ENCODE measurements at regions of chr5 and their contacts with region 1.

Region 1: GRCh38 chr5:168706655-168707069 is 127.5 kb upstream of the PANK3 start:
- DNase-seq: peak; percentile 9 to 58
- H3K4me3 ChIP-seq: no peak overlapping the region
- H3K27ac ChIP-seq: no peak overlapping the region
- H3K4me1 ChIP-seq: no peaks in the 10 kb centered on the region
- H3K27me3 ChIP-seq: no peaks in the 10 kb centered on the region
- CTCF ChIP-seq: peak; percentile 68 to 89 (median 71)
- EP300 ChIP-seq: no peak
- POLR2A ChIP-seq: no peak
- RAD21 ChIP-seq: peak; percentile 94 to 96

Region 2: GRCh38 chr5:168390491-168390890 is 316.2 kb before region 1 on chr5:
- CTCF ChIA-PET with region 1: no interaction called
- POLR2A ChIA-PET with region 1: no interaction called
- DNase-seq: no peak
- H3K4me3 ChIP-seq: no peak overlapping the region
- H3K27ac ChIP-seq: no peak overlapping the region
- H3K4me1 ChIP-seq: no peaks in the 10 kb centered on the region
- H3K27me3 ChIP-seq: no peaks in the 10 kb centered on the region
- CTCF ChIP-seq: no peak
- EP300 ChIP-seq: no peak
- POLR2A ChIP-seq: no peak
- RAD21 ChIP-seq: no peak

Region 3: DNA sequence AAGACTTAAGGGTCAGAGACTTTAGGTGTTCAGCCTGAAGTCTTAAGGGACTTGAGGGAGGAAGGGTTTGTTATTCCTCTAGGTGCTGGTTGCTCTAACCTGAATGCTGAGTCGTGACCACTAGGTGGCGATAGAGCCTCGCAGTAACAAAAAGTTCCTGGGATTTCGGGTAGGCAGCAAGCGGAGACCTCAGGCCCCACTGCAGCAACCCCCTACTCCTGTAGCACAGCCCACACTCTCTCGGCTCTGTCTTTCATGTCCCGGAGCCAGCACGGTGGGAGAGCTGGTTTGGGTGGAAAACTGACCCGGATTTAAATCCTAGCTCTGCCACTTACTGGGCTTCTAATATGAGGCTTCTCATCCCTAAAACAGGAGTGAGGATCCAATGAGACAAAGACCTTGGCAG is 27.1 kb before region 1 on chr5:
- CTCF ChIA-PET with region 1: interaction called, 13 read pairs
- POLR2A ChIA-PET with region 1: interaction called, 3 read pairs
- DNase-seq: peak; percentile 77 to 92
- H3K4me3 ChIP-seq: no peak overlapping the region
- H3K27ac ChIP-seq: no peak overlapping the region
- H3K4me1 ChIP-seq: no peaks in the 10 kb centered on the region; a peak in 1 of 7 replicates
- H3K27me3 ChIP-seq: no peaks in the 10 kb centered on the region
- CTCF ChIP-seq: peak; percentile 58 to 96 (median 85)
- EP300 ChIP-seq: no peak
- POLR2A ChIP-seq: no peak
- RAD21 ChIP-seq: peak; percentile 96 to 97

Region 4: GRCh38 chr5:168734620-168735300 is 28.1 kb after region 1 on chr5:
- CTCF ChIA-PET with region 1: interaction called, 17 read pairs
- POLR2A ChIA-PET with region 1: no interaction called
- DNase-seq: no peak
- H3K4me3 ChIP-seq: no peak overlapping the region
- H3K27ac ChIP-seq: no peak overlapping the region
- H3K4me1 ChIP-seq: no peaks in the 10 kb centered on the region; a peak in 1 of 7 replicates
- H3K27me3 ChIP-seq: no peaks in the 10 kb centered on the region
- CTCF ChIP-seq: no peak
- EP300 ChIP-seq: no peak
- POLR2A ChIP-seq: no peak
- RAD21 ChIP-seq: no peak

Region 5: GRCh38 chr5:168879929-168880328 is 173.3 kb after region 1 on chr5:
- CTCF ChIA-PET with region 1: interaction called, 14 read pairs
- POLR2A ChIA-PET with region 1: no interaction called
- DNase-seq: no peak
- H3K4me3 ChIP-seq: no peak overlapping the region
- H3K27ac ChIP-seq: no peak overlapping the region
- H3K4me1 ChIP-seq: peaks cover 3 to 16% (median 7%) of the 10 kb centered on the region in 4 experiments
- H3K27me3 ChIP-seq: peaks cover 0 to 7% (median 4%) of the 10 kb centered on the region in 4 experiments; a peak in 4 of 7 replicates
- CTCF ChIP-seq: no peak
- EP300 ChIP-seq: no peak
- POLR2A ChIP-seq: no peak
- RAD21 ChIP-seq: no peak

Region 6: GRCh38 chr5:168934169-168934568 is 227.5 kb after region 1 on chr5:
- CTCF ChIA-PET with region 1: interaction called, 10 read pairs
- POLR2A ChIA-PET with region 1: no interaction called
- DNase-seq: no peak
- H3K4me3 ChIP-seq: no peak overlapping the region
- H3K27ac ChIP-seq: no peak overlapping the region
- H3K4me1 ChIP-seq: peaks cover 0 to 5% (median 3%) of the 10 kb centered on the region in 4 experiments; a peak in 4 of 7 replicates
- H3K27me3 ChIP-seq: no peaks in the 10 kb centered on the region
- CTCF ChIP-seq: no peak
- EP300 ChIP-seq: no peak
- POLR2A ChIP-seq: no peak
- RAD21 ChIP-seq: no peak

Region 7: GRCh38 chr5:168987543-168988300 is 281.1 kb after region 1 on chr5:
- CTCF ChIA-PET with region 1: interaction called, 12 read pairs
- POLR2A ChIA-PET with region 1: no interaction called
- DNase-seq: peak; percentile 25 to 91
- H3K4me3 ChIP-seq: no peak overlapping the region
- H3K27ac ChIP-seq: no peak overlapping the region
- H3K4me1 ChIP-seq: peaks cover 3 to 22% (median 13%) of the 10 kb centered on the region in 4 experiments; a peak in 6 of 7 replicates
- H3K27me3 ChIP-seq: no peaks in the 10 kb centered on the region
- CTCF ChIP-seq: peak; percentile 46 to 85 (median 78)
- EP300 ChIP-seq: no peak
- POLR2A ChIP-seq: no peak
- RAD21 ChIP-seq: peak; percentile 92 to 94

Measured in H1 (cell line).